HEK293 (cell line): ENCODE measurements at regions of chr19 and their contacts with region 1.

Region 1: DNA sequence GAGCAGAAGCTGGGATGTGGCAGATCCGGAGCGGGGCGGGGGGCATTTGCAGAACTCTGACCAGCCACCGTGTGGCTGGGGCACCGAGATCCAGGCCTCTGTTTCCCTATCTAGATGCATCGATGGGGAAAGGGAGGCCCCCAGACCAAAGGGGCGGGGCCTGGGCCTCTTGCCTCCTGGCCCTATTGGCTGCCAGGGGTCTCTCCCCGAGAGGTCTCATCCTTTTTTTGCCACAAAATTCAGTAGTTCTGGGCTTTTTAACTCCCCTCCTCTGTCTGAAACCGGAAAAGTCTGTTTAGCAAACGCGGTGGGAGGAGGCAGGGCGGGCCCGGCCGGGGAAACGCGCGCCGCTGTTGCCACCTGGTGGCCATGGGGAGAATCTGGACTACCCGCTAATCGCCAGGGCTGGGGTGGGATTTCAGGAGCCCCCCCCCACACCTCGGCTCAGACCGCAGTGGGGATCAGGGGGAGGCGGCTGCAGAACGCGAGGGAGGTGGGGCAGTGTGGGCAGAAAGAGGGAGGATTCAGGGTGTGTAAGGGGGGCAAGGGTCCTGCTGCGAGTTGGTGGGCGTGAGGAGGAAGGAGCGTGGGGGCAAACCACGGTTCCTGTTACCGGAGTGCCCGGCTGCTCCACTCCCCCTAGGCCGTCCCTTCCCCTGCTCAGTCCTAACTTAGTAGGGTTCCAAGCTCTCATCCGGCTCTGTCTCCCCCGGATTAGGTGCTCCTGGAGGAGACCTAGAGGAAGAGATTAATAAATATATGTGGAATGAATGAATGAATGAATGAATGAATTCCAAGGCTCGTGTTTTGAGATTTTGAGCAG is 28.3 kb downstream of the IL12RB1 start:
- H3K4me3 ChIP-seq: peak overlapping the region; percentile 24
- H3K27ac ChIP-seq: no peak overlapping the region; the same call in 1 of the 2 replicates
- H3K4me1 ChIP-seq: no peaks in the 10 kb centered on the region
- CTCF ChIP-seq: peak; percentile 90

Region 2: DNA sequence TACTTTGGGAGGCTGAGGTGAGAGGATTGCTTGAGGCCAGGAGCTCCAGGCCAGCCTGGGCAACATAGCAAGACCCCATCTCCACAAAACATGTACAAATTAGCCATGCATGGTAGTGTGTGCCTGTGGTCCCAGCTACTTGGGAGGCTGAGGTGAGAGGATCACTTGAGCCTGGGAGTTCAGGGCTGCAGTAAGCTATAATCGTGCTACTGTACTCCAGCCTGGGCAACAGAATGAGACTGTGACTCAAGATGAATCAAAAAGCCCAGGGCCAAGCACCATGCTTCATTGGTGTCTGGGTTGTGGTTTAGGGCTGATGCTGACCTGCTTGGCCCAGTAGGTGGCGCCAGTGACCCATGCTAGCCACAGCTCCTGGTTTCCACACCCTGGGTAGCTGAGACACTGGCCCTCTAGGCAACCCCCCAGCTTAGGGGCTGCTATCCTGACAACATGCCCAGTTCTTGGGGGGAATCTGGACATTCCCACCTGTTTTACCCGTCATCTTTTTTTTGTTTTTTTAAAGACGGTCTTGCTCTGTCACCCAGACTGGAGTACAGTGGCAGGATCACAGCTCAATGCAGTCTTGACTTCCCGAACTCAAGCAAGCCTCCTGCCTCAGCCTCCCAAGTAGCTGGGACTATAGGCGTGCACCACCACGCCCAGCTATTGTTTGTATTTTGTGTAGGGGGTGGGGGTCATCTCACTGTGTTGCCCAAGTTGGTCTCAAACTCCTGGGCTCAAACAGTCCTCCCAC is 120.2 kb before region 1 on chr19:
- CTCF ChIA-PET with region 1: interaction called, 20 read pairs
- POLR2A ChIA-PET with region 1: interaction called, 3 read pairs
- H3K4me3 ChIP-seq: no peak overlapping the region
- H3K27ac ChIP-seq: no peak overlapping the region
- H3K4me1 ChIP-seq: no peaks in the 10 kb centered on the region
- CTCF ChIP-seq: peak; percentile 88

Region 3: DNA sequence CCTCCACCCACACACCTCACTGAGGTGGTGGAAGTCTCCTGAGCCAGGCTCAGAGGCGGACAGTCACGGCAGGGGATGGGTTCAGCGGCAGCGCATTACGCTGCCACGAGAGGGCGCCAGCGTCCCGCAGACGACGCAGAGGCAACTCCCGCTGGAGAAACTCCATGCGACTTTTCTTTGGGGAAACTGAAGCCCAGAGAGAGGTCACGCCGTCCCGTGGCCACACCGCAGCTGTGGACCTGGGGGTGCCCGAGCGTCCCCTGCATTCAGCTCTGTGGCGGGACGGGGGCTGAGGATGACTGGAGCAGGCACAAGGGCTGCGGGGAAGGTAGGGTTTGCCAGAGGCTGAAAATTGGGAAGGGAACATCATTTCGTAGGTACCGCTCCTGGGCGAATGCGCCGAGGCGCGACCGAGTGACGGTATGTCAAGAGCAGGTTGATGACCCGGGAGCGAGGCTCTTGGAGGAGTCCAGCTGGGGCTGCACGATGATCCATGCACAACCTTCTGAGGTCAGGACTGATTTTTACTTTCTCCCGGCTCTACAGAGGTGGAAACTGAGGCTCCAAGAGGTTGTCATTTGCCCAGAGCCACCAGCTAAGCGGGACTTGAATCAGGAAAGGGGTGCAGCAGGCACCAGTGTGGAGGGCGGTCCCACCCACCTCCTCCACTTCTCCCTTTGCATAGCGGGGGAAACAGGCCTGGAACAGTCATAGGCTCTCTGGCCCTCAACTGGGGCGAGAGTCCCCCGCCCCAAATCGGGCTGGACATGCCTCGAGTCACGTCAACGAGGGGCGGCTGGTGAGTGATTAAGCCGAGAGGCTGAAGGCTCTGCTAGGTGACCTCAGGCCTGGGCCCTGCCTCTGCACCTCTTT is 51.1 kb before region 1 on chr19:
- CTCF ChIA-PET with region 1: interaction called, 101 read pairs
- POLR2A ChIA-PET with region 1: interaction called, 5 read pairs
- H3K4me3 ChIP-seq: peak overlapping the region; percentile 38
- H3K27ac ChIP-seq: no peak overlapping the region
- H3K4me1 ChIP-seq: no peaks in the 10 kb centered on the region; the same call in 1 of the 2 replicates
- CTCF ChIP-seq: peak; percentile 96

Region 4: DNA sequence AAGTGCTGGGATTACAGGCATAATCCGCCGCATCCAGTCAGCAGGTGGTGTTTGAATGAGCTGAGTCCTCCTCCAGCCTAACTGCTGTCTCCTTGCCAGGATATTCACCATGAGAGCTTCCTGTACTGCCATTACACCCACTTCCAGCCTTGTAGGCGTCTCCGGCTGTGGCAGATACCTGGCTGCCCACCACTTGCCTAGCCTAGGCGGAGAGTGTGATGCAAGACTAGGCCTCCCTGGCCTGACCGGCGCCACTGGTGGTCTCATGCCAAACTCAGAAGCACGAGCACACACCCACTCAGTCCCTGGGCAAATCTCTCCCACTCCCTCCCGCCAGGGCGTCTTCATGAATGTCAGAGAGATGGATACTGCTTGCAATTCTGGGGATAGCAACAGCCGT is 11.8 kb after region 1 on chr19:
- CTCF ChIA-PET with region 1: interaction called, 14 read pairs
- POLR2A ChIA-PET with region 1: no interaction called
- H3K4me3 ChIP-seq: no peak overlapping the region
- H3K27ac ChIP-seq: no peak overlapping the region
- H3K4me1 ChIP-seq: no peaks in the 10 kb centered on the region
- CTCF ChIP-seq: no peak